Naive thymus-derived CD4-positive, alpha-beta T cell (primary cell): ENCODE measurements at regions of chr10 and their contacts with region 1.

Region 1: DNA sequence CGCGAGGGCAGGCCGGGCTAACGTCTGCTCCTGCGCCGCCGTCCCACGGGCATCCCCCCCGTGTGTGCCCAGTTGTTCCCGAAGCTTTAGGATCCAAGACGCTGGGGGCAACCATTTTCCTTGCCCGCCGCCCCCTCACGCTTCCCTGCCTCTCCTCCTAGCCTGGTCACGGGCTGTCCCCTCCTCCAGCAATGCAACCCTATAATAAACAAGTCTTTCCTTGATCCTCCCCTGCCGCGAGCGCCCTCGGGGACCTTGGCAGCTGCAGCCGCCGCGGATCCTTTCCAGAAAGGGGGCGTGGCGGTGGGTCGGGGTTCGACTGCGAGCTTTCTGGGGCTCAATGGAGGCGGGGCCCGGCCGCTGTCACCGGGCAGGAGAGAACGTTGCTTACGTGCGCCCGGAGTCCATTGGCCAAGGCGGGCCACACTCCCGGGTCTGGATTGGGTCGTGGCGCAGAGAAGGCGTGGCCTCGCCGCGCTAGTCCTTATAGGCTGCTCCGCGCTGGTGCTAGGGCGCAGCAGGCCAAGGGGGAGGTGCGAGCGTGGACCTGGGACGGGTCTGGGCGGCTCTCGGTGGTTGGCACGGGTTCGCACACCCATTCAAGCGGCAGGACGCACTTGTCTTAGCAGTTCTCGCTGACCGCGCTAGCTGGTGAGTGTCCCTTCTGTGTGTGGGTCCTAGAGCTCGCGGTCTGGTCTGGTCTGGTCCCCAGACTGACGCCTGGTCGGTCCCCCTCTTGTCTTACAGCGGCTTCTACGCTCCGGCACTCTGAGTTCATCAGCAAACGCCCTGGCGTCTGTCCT is at the start of gene DDIT4:
- DNase-seq: peak; percentile 92 to 98 (median 97)
- ATAC-seq: peak; percentile 97
- H3K4me3 ChIP-seq: peak within 1 kb of the TSS; percentile 95
- H3K4me3 Mint-ChIP-seq: peak within 1 kb of the TSS; percentile 97 to 100 (median 99)
- H3K27ac ChIP-seq: peak within 1 kb of the TSS; percentile 96
- H3K27ac Mint-ChIP-seq: peak within 1 kb of the TSS; percentile 93 to 98 (median 95)
- H3K4me1 ChIP-seq: peaks cover 9 to 20% of the 10 kb centered on the region in 2 donors
- H3K4me1 Mint-ChIP-seq: peaks cover 34 to 63% (median 59%) of the 10 kb centered on the region in 7 donors
- H3K27me3 ChIP-seq: no peaks in the 10 kb centered on the region
- H3K27me3 Mint-ChIP-seq: no peaks in the 10 kb centered on the region
- total RNA-seq, gene DDIT4: 25.4 to 335 (median 135) TPM

Region 2: GRCh38 chr10:72133517-72133916 is 140.1 kb before region 1 on chr10:
- CTCF ChIA-PET with region 1: no interaction called
- POLR2A ChIA-PET with region 1: interaction called, 3 read pairs
- intact Hi-C with region 1: loop called in 1 of 2 experiments (anchors 2 kb)
- DNase-seq: no peak
- ATAC-seq: peak; percentile 74
- H3K4me3 ChIP-seq: no peak overlapping the region
- H3K4me3 Mint-ChIP-seq: peak overlapping the region in 1 of 10 donors; percentile 56
- H3K27ac ChIP-seq: no peak overlapping the region
- H3K27ac Mint-ChIP-seq: peak overlapping the region; percentile 16 to 94 (median 83)
- H3K4me1 ChIP-seq: peaks cover 0 to 19% of the 10 kb centered on the region in 2 donors
- H3K4me1 Mint-ChIP-seq: peaks cover 22 to 46% (median 37%) of the 10 kb centered on the region in 7 donors
- H3K27me3 ChIP-seq: no peaks in the 10 kb centered on the region
- H3K27me3 Mint-ChIP-seq: no peaks in the 10 kb centered on the region

Region 3: GRCh38 chr10:72260588-72261322 is 12.9 kb before region 1 on chr10:
- CTCF ChIA-PET with region 1: interaction called, 46 read pairs
- POLR2A ChIA-PET with region 1: interaction called, 219 read pairs
- intact Hi-C with region 1: loop called (anchors 1 kb)
- DNase-seq: peak; percentile 55 to 89 (median 63)
- ATAC-seq: peak; percentile 85
- H3K4me3 ChIP-seq: peak overlapping the region; percentile 68
- H3K4me3 Mint-ChIP-seq: peak overlapping the region; percentile 83 to 93 (median 90)
- H3K27ac ChIP-seq: peak overlapping the region; percentile 78
- H3K27ac Mint-ChIP-seq: peak overlapping the region; percentile 87 to 97 (median 94)
- H3K4me1 ChIP-seq: peaks cover 45 to 63% of the 10 kb centered on the region in 2 donors
- H3K4me1 Mint-ChIP-seq: peaks cover 32 to 83% (median 67%) of the 10 kb centered on the region in 7 donors
- H3K27me3 ChIP-seq: no peaks in the 10 kb centered on the region
- H3K27me3 Mint-ChIP-seq: no peaks in the 10 kb centered on the region

Region 4: GRCh38 chr10:72297968-72298773 is 24.6 kb after region 1 on chr10:
- CTCF ChIA-PET with region 1: interaction called, 33 read pairs
- POLR2A ChIA-PET with region 1: interaction called, 93 read pairs
- intact Hi-C with region 1: loop called (anchors 1 kb)
- DNase-seq: peak; percentile 68 to 90 (median 78)
- ATAC-seq: peak; percentile 76
- H3K4me3 ChIP-seq: peak overlapping the region; percentile 69
- H3K4me3 Mint-ChIP-seq: peak overlapping the region; percentile 27 to 89 (median 84)
- H3K27ac ChIP-seq: peak overlapping the region; percentile 80
- H3K27ac Mint-ChIP-seq: peak overlapping the region; percentile 97 to 100 (median 99)
- H3K4me1 ChIP-seq: peaks cover 29 to 30% of the 10 kb centered on the region in 2 donors
- H3K4me1 Mint-ChIP-seq: peaks cover 18 to 61% (median 55%) of the 10 kb centered on the region in 7 donors
- H3K27me3 ChIP-seq: no peaks in the 10 kb centered on the region
- H3K27me3 Mint-ChIP-seq: no peaks in the 10 kb centered on the region

Region 5: DNA sequence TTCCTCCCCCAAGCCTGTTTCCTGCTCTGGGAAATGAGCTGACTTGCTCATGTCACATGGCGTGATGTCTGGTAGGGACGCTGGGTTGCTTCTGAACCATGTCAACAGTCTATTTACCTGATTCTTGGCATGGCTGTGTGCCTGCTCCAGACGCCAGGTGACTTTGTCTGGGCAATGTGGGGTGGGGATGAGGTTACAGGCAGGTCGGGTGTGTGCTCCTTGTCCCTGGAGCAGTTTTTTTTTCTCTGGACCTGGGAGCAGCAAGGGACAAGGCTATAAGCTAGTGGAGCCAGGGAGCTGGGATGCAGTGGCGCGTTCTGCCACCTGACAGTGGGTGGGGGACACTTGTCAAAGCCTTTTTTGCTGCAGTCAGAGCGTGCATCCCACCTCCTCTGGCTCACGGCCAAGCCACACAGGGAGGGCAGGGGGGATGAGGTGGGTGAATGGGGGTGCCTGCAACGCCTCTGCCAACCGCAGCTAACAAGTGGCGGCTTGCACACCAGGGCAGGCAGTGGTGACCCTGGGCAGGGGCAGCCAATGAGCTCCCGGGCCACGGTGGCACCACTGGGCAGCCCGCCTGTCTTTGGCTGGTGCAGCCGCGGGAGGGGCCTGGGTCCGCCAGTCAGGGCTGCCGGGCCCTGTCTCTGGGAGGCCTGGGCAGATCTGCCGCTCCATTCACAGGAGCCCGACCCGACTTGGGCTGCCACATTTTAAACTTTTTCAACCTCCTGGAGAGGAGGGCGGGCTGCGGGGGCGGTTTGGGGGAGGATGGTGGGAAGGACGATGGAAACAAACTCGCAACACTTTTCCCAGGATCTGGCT is 58.2 kb after region 1 on chr10:
- CTCF ChIA-PET with region 1: interaction called, 69 read pairs
- POLR2A ChIA-PET with region 1: interaction called, 86 read pairs
- intact Hi-C with region 1: loop called (anchors 1 kb)
- DNase-seq: peak; percentile 77 to 94 (median 91)
- ATAC-seq: peak; percentile 84
- H3K4me3 ChIP-seq: peak overlapping the region; percentile 61
- H3K4me3 Mint-ChIP-seq: peak overlapping the region; percentile 76 to 93 (median 84)
- H3K27ac ChIP-seq: peak overlapping the region; percentile 79
- H3K27ac Mint-ChIP-seq: peak overlapping the region; percentile 94 to 99 (median 98)
- H3K4me1 ChIP-seq: peaks cover 84 to 94% of the 10 kb centered on the region in 2 donors
- H3K4me1 Mint-ChIP-seq: peaks cover 52 to 95% (median 90%) of the 10 kb centered on the region in 7 donors
- H3K27me3 ChIP-seq: no peaks in the 10 kb centered on the region
- H3K27me3 Mint-ChIP-seq: no peaks in the 10 kb centered on the region